Left lung (tissue), 14 donors: ENCODE measurements at regions of chr6 and their contacts with region 1.

Region 1: GRCh38 chr6:70107852-70108629 is 194.8 kb downstream of the COL9A1 start:
- DNase-seq: peak in 2 of 4 donors; percentile 57 to 75
- ATAC-seq: peak; percentile 58
- H3K4me3 ChIP-seq: no peak overlapping the region
- H3K27ac ChIP-seq: no peak overlapping the region
- H3K4me1 ChIP-seq: no peaks in the 10 kb centered on the region
- H3K27me3 ChIP-seq: no peaks in the 10 kb centered on the region
- CTCF ChIP-seq: peak; percentile 29 to 72

Region 2: DNA sequence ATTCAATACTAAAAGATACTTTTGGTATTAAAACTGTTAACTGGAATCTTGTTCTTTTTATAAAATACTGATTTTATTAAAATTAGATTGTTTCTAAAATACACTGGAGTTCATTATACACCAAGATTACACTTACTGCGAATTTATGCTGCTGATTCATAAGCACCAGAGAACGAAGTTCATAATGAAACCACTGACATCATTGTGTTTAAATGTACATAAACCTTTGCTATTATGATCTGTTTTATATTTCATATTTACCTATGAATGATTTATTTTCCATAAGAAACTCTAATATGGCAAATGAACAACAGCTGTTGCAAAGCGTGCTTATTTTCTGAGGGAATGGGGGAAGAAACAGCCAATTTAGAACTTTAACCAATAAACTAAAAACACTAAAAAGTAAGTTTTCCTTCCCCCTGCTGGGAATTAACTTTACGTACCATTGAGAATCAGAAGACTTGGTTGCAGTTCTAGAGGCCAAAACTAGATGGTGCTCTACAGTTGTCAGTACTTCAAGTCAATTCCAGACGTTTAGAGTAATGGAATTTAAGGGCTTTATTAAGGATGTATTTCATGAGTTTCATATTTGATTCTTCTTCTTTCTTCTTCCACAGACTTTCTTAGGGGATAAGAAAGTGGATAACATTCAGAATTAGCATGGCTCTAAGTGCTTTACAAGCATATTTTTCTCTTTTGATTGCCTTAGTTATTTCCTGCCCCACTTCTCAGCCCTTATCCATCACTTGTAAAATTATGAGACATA is 272.4 kb before region 1 on chr6:
- intact Hi-C with region 1: loop called in 1 of 2 experiments (anchors 10 kb)
- DNase-seq: peak in 1 of 4 donors; percentile 79
- ATAC-seq: peak; percentile 93
- H3K4me3 ChIP-seq: no peak overlapping the region
- H3K27ac ChIP-seq: no peak overlapping the region
- H3K4me1 ChIP-seq: no peaks in the 10 kb centered on the region
- H3K27me3 ChIP-seq: no peaks in the 10 kb centered on the region
- CTCF ChIP-seq: peak; percentile 65 to 67